ENCODE measurements at regions of chr5 and their contacts with region 1.

Region 1: GRCh38 chr5:81506900-81507588 is 113.1 kb upstream of the ACOT12 start:
- DNase-seq: peak; percentile 93
- ATAC-seq: peak; percentile 95
- H3K4me3 ChIP-seq: no peak overlapping the region
- H3K27ac ChIP-seq: no peak overlapping the region
- H3K4me1 ChIP-seq: no peaks in the 10 kb centered on the region
- H3K27me3 ChIP-seq: no peaks in the 10 kb centered on the region
- CTCF ChIP-seq: peak; percentile 96
- POLR2A ChIP-seq: no peak
- RAD21 ChIP-seq: peak; percentile 98

Region 2: GRCh38 chr5:80216753-80217596 is 1290.1 kb before region 1 on chr5:
- CTCF ChIA-PET with region 1: no interaction called
- POLR2A ChIA-PET with region 1: no interaction called
- dilution Hi-C with region 1: no loop called
- in situ Hi-C with region 1: no loop called
- intact Hi-C with region 1: no loop called
- DNase-seq: no peak
- ATAC-seq: no peak
- H3K4me3 ChIP-seq: no peak overlapping the region
- H3K27ac ChIP-seq: no peak overlapping the region
- H3K4me1 ChIP-seq: 0 out of 2 replicates have a peak, but pooled peaks cover 2% of the 10 kb centered on the region
- H3K27me3 ChIP-seq: no peaks in the 10 kb centered on the region
- CTCF ChIP-seq: no peak
- POLR2A ChIP-seq: no peak
- RAD21 ChIP-seq: no peak

Region 3: DNA sequence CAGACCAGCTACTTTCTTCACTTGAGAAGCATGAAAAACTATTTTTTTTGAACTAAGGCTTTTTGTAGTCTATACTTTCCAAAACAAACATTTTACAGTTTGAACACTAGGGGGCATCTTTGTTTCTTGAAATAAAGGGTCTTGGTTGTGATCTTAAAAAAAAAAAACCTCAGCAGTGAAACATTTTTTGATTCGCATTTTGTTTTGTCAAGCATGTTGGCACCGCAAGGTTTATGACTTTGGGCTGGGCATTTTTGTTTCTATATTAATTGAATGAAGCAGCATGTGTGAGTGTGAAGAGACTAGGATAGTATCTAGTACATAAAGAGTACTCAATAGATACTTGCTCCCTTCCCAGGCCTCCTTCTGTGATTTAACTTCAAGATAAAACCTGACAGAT is 81.5 kb before region 1 on chr5:
- CTCF ChIA-PET with region 1: no interaction called
- POLR2A ChIA-PET with region 1: no interaction called
- dilution Hi-C with region 1: no loop called
- in situ Hi-C with region 1: no loop called
- intact Hi-C with region 1: loop called (anchors 2 kb)
- DNase-seq: peak; percentile 65
- ATAC-seq: no peak
- H3K4me3 ChIP-seq: no peak overlapping the region
- H3K27ac ChIP-seq: peak overlapping the region; percentile 42; the same call in 1 of the 2 replicates
- H3K4me1 ChIP-seq: peaks cover 21% of the 10 kb centered on the region
- H3K27me3 ChIP-seq: no peaks in the 10 kb centered on the region
- CTCF ChIP-seq: peak; percentile 57
- POLR2A ChIP-seq: no peak
- RAD21 ChIP-seq: peak; percentile 61

Region 4: GRCh38 chr5:81739291-81739690 is 232.2 kb after region 1 on chr5:
- CTCF ChIA-PET with region 1: no interaction called
- POLR2A ChIA-PET with region 1: no interaction called
- dilution Hi-C with region 1: no loop called
- in situ Hi-C with region 1: no loop called
- intact Hi-C with region 1: no loop called
- DNase-seq: no peak
- ATAC-seq: peak; percentile 56
- H3K4me3 ChIP-seq: no peak overlapping the region
- H3K27ac ChIP-seq: no peak overlapping the region
- H3K4me1 ChIP-seq: peaks cover 2% of the 10 kb centered on the region; the same call in 1 of the 2 replicates
- H3K27me3 ChIP-seq: no peaks in the 10 kb centered on the region
- CTCF ChIP-seq: no peak
- POLR2A ChIP-seq: no peak
- RAD21 ChIP-seq: no peak

Region 5: DNA sequence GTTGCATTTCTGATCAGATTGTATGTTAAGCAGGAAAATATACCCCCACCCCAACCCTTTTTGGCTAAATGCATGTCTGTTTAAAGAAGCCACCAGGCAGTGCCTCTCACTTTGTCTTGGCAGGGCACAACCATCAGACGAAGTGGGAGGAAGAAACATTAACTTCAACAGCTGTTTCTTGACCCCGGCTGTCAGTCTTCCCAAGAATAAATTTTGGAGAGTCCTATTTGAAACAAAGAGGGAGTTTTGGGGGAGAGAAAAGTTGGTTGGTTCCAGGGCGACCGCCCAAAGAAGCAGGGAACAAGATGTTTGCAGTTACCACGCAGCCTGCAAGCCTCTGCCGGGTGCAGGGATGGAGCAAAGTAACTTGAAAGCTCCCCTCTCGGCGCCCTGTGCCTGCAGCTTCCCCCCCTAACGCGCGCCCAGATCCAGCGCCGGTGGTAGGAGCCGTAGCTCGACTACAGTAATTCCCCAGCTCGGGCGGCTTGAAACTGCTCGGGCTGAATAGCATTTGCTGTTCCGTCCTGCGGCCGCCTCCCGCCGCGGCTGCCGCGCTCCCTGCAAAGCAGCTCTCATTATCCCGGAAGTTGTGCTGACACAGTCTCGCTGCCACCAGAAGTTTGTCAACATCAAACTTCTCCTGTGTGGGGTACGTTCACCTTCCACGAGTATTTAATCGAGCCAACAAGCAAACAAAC is 344.6 kb after region 1 on chr5:
- CTCF ChIA-PET with region 1: no interaction called
- POLR2A ChIA-PET with region 1: no interaction called
- dilution Hi-C with region 1: no loop called
- in situ Hi-C with region 1: no loop called
- intact Hi-C with region 1: loop called (anchors 1 kb)
- DNase-seq: peak; percentile 94
- ATAC-seq: peak; percentile 93
- H3K4me3 ChIP-seq: peak overlapping the region; percentile 31
- H3K27ac ChIP-seq: peak overlapping the region; percentile 94
- H3K4me1 ChIP-seq: peaks cover 19% of the 10 kb centered on the region
- H3K27me3 ChIP-seq: no peaks in the 10 kb centered on the region
- CTCF ChIP-seq: 0 out of 2 replicates have a peak, but pooled peaks have one; percentile 1
- POLR2A ChIP-seq: no peak
- RAD21 ChIP-seq: peak; percentile 60

Region 6: GRCh38 chr5:82107267-82107666 is 600.2 kb after region 1 on chr5:
- CTCF ChIA-PET with region 1: no interaction called
- POLR2A ChIA-PET with region 1: no interaction called
- dilution Hi-C with region 1: no loop called
- in situ Hi-C with region 1: no loop called
- intact Hi-C with region 1: loop called (anchors 2 kb)
- DNase-seq: peak; percentile 19
- ATAC-seq: peak; percentile 64
- H3K4me3 ChIP-seq: no peak overlapping the region
- H3K27ac ChIP-seq: no peak overlapping the region
- H3K4me1 ChIP-seq: no peaks in the 10 kb centered on the region
- H3K27me3 ChIP-seq: no peaks in the 10 kb centered on the region
- CTCF ChIP-seq: peak; percentile 41
- POLR2A ChIP-seq: no peak
- RAD21 ChIP-seq: 0 out of 2 replicates have a peak, but pooled peaks have one; percentile 19

Region 7: GRCh38 chr5:82225525-82226172 is 718.6 kb after region 1 on chr5:
- CTCF ChIA-PET with region 1: no interaction called
- POLR2A ChIA-PET with region 1: no interaction called
- dilution Hi-C with region 1: no loop called
- in situ Hi-C with region 1: no loop called
- intact Hi-C with region 1: loop called (anchors 2 kb)
- DNase-seq: peak; percentile 85
- ATAC-seq: peak; percentile 96
- H3K4me3 ChIP-seq: no peak overlapping the region
- H3K27ac ChIP-seq: no peak overlapping the region; the same call in 1 of the 2 replicates
- H3K4me1 ChIP-seq: peaks cover 2% of the 10 kb centered on the region; the same call in 1 of the 2 replicates
- H3K27me3 ChIP-seq: no peaks in the 10 kb centered on the region
- CTCF ChIP-seq: peak; percentile 93
- POLR2A ChIP-seq: no peak
- RAD21 ChIP-seq: peak; percentile 89

Measured in IMR-90 (cell line).